SK-N-SH (cell line): ENCODE measurements at regions of chr2 and their contacts with region 1.

Region 1: DNA sequence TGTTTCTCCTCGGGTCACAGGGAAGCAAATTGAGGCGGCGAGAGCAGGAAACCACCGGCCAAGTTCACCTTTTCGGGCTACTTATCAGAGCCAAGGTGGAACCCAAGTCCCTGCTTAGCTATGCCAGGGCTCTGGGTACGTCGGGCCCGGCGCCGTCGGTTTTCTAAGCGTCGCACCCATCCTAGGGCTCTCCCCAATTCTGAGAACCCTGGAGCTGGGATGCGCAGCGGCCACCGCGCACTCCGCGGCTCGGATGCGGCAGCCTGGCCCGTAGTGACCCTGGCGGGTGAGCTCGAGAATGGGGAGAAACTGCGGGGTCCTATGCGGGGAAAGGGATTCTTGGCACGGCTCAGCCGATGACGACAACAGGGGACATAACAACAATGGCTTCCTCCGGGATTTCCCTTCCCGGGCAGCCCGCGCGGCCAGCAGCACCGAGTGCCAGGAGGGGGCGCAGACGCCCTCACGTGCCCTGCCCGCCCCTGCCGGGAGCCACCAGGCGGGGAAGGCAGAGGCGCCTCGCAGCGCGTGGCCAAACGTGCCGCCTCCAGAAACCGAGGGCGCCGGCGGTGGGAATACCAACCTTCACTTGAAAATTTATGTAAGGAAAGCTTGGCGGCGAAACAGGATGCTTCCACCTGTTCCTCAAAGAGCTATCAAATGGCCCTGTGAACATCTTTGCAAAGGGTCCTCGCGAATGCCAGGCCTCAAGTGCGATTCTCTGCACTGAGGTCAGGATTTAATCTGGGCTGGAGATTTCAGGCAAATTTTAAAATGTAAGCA is 2.1 kb upstream of the SLC30A3 start:
- DNase-seq: peak; percentile 100
- H3K4me3 ChIP-seq: peak overlapping the region; percentile 49 to 55
- H3K27ac ChIP-seq: no peak overlapping the region
- H3K4me1 ChIP-seq: peaks cover 6 to 28% of the 10 kb centered on the region in 2 experiments; a peak in 1 of 4 replicates
- H3K27me3 ChIP-seq: peaks cover 86% of the 10 kb centered on the region
- CTCF ChIP-seq: peak; percentile 78
- EP300 ChIP-seq: no peak
- RAD21 ChIP-seq: peak; percentile 58

Region 2: DNA sequence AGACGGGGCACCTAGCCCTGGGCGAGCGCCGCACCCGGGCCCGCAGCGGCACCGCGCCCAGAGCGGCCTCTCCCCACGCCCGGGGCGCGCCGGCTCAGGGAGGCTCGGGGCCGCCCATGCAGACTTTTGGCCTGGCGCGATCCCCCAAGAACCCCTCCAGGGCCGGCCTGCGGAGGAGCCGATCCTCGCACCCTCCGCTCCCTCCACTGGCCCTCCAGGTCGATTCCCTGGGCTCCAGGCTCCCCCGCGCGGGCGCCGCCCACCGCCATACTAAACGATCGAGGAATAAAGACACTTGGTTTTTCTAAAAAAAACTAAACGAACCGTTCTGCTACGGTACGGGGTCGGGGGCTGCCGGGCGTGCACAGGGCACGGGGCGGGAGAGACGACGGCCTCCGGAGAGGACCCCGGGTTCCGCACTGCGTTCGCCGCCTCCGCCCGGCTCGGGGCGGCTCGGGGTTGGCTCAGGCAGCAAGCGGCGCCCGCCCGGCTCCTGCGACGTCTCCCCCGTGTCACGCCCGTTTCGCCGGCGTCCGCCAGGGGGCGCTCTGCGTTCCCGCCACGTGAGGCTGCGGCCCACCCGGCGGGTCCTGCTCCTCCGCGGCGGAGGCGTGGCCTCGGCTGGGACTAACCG is 178.7 kb before region 1 on chr2:
- CTCF ChIA-PET with region 1: interaction called, 18 read pairs
- POLR2A ChIA-PET with region 1: no interaction called
- DNase-seq: peak; percentile 100
- H3K4me3 ChIP-seq: peak overlapping the region; percentile 65 to 75
- H3K27ac ChIP-seq: peak overlapping the region; percentile 37 to 89; a peak in 3 of 4 replicates
- H3K4me1 ChIP-seq: peaks cover 9 to 46% of the 10 kb centered on the region in 2 experiments; a peak in 3 of 4 replicates
- H3K27me3 ChIP-seq: no peaks in the 10 kb centered on the region
- CTCF ChIP-seq: peak; percentile 69
- EP300 ChIP-seq: peak in 1 of 2 experiments; percentile 42; a peak in 1 of 4 replicates
- RAD21 ChIP-seq: peak; percentile 52

Region 3: GRCh38 chr2:27123302-27124231 is 141.4 kb before region 1 on chr2 and contains the start of gene ABHD1:
- CTCF ChIA-PET with region 1: interaction called, 12 read pairs
- POLR2A ChIA-PET with region 1: no interaction called
- DNase-seq: peak; percentile 94
- H3K4me3 ChIP-seq: peak within 1 kb of the TSS; percentile 54 to 59
- H3K27ac ChIP-seq: peak within 1 kb of the TSS in 1 of 2 experiments; percentile 64; a peak in 1 of 4 replicates
- H3K4me1 ChIP-seq: peaks cover 0 to 18% of the 10 kb centered on the region in 2 experiments; a peak in 1 of 4 replicates
- H3K27me3 ChIP-seq: no peaks in the 10 kb centered on the region
- CTCF ChIP-seq: no peak
- EP300 ChIP-seq: no peak
- RAD21 ChIP-seq: no peak
- polyA plus RNA-seq, gene ABHD1: 3.3 and 4.1 TPM in 2 replicates

Region 4: DNA sequence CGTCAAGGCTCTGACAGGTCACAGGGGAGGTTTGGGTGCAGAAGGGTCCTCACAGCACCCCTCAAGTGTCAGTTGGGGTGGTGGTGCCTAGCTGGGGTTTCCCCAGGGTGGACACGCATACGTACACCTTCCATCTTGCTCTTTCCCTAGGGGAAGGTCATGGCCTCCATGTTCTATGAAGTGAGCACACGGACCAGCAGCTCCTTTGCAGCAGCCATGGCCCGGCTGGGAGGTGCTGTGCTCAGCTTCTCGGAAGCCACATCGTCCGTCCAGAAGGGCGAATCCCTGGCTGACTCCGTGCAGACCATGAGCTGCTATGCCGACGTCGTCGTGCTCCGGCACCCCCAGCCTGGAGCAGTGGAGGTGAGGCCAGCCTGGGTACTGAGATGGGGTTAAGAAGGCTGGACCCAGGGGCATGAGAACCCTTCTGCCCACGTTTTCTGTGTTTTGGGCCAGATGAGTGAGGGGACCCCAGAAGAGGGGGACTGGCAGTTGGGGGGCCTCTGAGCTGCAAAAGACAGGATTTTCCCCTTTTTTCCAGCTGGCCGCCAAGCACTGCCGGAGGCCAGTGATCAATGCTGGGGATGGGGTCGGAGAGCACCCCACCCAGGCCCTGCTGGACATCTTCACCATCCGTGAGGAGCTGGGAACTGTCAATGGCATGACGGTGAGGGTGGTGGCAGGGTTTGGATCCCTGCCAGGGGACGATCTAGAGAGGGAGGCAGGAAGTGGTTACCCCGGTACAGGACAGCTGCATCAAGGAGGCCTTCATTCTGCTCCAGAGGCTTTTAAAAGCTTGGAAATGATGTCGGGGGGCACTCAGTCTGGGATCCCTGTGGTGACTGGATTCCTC is 23.0 kb before region 1 on chr2:
- CTCF ChIA-PET with region 1: interaction called, 11 read pairs
- POLR2A ChIA-PET with region 1: no interaction called
- DNase-seq: no peak
- H3K4me3 ChIP-seq: no peak overlapping the region
- H3K27ac ChIP-seq: no peak overlapping the region
- H3K4me1 ChIP-seq: no peaks in the 10 kb centered on the region; a peak in 1 of 4 replicates
- H3K27me3 ChIP-seq: no peaks in the 10 kb centered on the region
- CTCF ChIP-seq: no peak
- EP300 ChIP-seq: no peak
- RAD21 ChIP-seq: no peak

Region 5: DNA sequence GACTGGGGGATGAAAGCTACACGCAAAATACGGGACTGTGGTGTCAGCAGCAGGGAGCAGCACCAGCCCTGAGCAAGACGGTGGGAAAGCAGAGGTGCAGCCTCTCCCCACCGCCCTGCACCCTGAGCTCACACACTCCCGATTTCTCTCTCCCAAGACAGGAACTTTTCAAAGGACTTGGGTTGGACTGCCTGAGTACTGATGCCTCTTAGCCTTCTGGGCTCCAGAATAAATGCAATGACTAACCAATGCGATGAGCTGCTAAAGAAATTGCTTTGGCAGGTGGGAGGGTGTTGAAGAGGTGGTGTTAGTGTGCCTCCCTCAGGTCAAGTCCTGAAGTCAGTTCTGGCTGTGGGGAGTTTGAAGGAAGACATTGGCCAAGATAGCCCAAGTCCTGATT is 26.9 kb after region 1 on chr2:
- CTCF ChIA-PET with region 1: interaction called, 392 read pairs
- POLR2A ChIA-PET with region 1: interaction called, 3 read pairs
- DNase-seq: no peak
- H3K4me3 ChIP-seq: no peak overlapping the region
- H3K27ac ChIP-seq: no peak overlapping the region
- H3K4me1 ChIP-seq: peaks cover 2 to 13% of the 10 kb centered on the region in 2 experiments; a peak in 3 of 4 replicates
- H3K27me3 ChIP-seq: no peaks in the 10 kb centered on the region
- CTCF ChIP-seq: peak; percentile 38
- EP300 ChIP-seq: no peak
- RAD21 ChIP-seq: peak; percentile 26

Region 6: DNA sequence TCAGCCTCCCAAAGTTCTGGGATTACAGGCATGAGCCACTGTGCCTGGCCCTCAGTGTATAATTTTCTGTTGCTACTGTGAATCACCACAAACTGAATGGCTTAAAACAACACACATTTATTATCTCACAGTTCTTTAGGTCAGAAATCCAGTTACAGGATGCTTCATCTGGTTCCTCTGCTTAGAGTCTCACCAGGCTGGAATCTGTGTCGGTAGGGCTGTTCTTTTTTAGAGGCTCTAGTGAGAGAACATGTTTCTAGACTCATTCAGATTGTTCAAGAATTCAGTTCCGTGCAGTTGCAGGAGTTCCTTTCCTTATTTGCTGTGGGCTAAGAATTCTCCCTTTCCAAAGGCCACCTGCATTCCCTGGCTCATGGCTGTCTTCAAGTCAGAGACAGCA is 341.7 kb after region 1 on chr2:
- CTCF ChIA-PET with region 1: no interaction called
- POLR2A ChIA-PET with region 1: no interaction called
- DNase-seq: no peak
- H3K4me3 ChIP-seq: no peak overlapping the region
- H3K27ac ChIP-seq: peak overlapping the region in 1 of 2 experiments; percentile 38; a peak in 1 of 4 replicates
- H3K4me1 ChIP-seq: no peaks in the 10 kb centered on the region
- H3K27me3 ChIP-seq: no peaks in the 10 kb centered on the region
- CTCF ChIP-seq: no peak
- EP300 ChIP-seq: no peak
- RAD21 ChIP-seq: no peak